ENCODE measurements at regions of chr20 and their contacts with region 1.

Region 1: DNA sequence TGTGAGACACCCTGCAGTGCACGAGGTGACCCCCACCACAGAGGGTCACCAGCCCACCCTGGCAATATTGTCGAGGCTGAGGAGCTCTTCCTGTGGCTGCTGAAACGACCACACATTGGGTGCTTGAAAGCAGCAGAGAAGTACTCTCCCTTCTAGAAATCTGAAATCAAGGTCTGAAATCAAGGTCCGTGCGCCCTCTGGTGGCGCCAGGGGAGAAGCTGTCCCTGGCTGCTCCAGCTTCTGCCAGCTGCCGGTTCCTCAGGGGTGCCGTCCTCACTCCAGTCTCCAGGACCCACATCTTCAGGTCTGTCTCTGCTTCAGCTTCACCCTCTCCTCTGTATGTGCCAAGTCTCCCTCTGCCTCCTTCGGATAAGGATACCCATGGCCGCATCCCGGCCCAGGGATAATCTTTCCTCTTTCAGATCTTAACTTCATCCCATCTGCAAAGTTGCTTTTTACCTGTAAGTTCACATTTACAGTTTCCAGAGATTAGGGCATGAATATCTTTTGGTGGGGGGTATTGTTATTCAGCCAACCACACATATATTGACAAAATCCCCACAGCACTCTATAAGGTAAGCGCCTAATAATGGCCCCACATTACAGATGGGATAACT is 108.3 kb upstream of the PHACTR3 start:
- DNase-seq: peak; percentile 65
- H3K4me3 Mint-ChIP-seq: no peak overlapping the region
- H3K27ac Mint-ChIP-seq: no peak overlapping the region
- H3K4me1 Mint-ChIP-seq: no peaks in the 10 kb centered on the region
- H3K27me3 Mint-ChIP-seq: peaks cover 71% of the 10 kb centered on the region
- CTCF ChIP-seq: peak; percentile 77

Region 2: DNA sequence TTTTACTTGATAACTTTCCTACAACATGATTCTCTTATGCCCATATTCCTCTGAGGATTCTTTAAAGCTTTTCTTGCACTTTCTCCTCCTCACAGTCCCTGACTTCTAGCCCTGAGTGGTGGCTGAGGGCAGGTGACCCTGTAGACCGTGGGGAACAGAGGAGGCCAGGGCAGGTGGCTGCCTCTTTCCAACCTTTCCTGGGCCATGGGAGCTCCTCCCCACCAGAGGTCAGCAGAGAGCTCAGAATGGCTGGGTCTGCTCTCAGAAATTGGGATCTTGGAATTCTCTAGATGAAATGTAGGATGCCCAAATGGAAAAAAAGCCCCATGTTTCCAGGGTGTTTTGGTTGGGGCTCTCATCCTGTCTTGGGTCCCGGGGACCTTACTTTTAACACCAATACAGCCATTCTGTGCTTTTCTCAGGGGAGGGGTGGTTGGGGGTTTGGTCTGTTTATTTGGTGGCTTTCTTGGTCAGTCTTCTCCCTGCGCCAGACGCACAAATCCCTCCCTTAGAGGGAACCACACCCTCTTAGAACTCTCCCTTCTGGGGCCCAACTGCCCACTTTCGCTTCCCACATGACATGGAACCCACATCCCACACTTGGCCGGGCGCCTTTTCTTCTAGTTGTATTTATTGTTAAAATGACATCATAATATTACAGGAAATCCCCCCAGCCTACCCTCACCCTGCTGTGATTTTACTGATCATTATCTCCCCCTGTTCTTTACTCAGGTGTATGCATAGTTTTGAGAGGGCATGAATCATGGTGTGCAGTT is 625.6 kb before region 1 on chr20:
- CTCF ChIA-PET with region 1: interaction called, 43 read pairs
- POLR2A ChIA-PET with region 1: no interaction called
- intact Hi-C with region 1: no loop called
- DNase-seq: peak; percentile 75
- H3K4me3 Mint-ChIP-seq: no peak overlapping the region
- H3K27ac Mint-ChIP-seq: no peak overlapping the region
- H3K4me1 Mint-ChIP-seq: peaks cover 1% of the 10 kb centered on the region
- H3K27me3 Mint-ChIP-seq: peaks cover 26% of the 10 kb centered on the region
- CTCF ChIP-seq: peak; percentile 87

Region 3: GRCh38 chr20:59087829-59088433 is 408.1 kb before region 1 on chr20:
- CTCF ChIA-PET with region 1: interaction called, 13 read pairs
- POLR2A ChIA-PET with region 1: no interaction called
- intact Hi-C with region 1: no loop called
- DNase-seq: peak; percentile 77
- H3K4me3 Mint-ChIP-seq: no peak overlapping the region
- H3K27ac Mint-ChIP-seq: no peak overlapping the region
- H3K4me1 Mint-ChIP-seq: peaks cover 16% of the 10 kb centered on the region
- H3K27me3 Mint-ChIP-seq: peaks cover 51% of the 10 kb centered on the region
- CTCF ChIP-seq: peak; percentile 81

Region 4: GRCh38 chr20:59455402-59456341 is 40.3 kb before region 1 on chr20:
- CTCF ChIA-PET with region 1: interaction called, 36 read pairs
- POLR2A ChIA-PET with region 1: interaction called, 4 read pairs
- intact Hi-C with region 1: no loop called
- DNase-seq: peak; percentile 34
- H3K4me3 Mint-ChIP-seq: no peak overlapping the region
- H3K27ac Mint-ChIP-seq: no peak overlapping the region
- H3K4me1 Mint-ChIP-seq: no peaks in the 10 kb centered on the region
- H3K27me3 Mint-ChIP-seq: peaks cover 61% of the 10 kb centered on the region
- CTCF ChIP-seq: peak; percentile 55

Region 5: GRCh38 chr20:59485576-59486454 is 10.2 kb before region 1 on chr20:
- CTCF ChIA-PET with region 1: interaction called, 38 read pairs
- POLR2A ChIA-PET with region 1: no interaction called
- intact Hi-C with region 1: no loop called
- DNase-seq: no peak
- H3K4me3 Mint-ChIP-seq: no peak overlapping the region
- H3K27ac Mint-ChIP-seq: no peak overlapping the region
- H3K4me1 Mint-ChIP-seq: no peaks in the 10 kb centered on the region
- H3K27me3 Mint-ChIP-seq: peaks cover 64% of the 10 kb centered on the region
- CTCF ChIP-seq: no peak

Region 6: GRCh38 chr20:59518881-59519688 is 23.1 kb after region 1 on chr20:
- CTCF ChIA-PET with region 1: interaction called, 17 read pairs
- POLR2A ChIA-PET with region 1: no interaction called
- intact Hi-C with region 1: no loop called
- DNase-seq: peak; percentile 62
- H3K4me3 Mint-ChIP-seq: no peak overlapping the region
- H3K27ac Mint-ChIP-seq: no peak overlapping the region
- H3K4me1 Mint-ChIP-seq: no peaks in the 10 kb centered on the region
- H3K27me3 Mint-ChIP-seq: peaks cover 90% of the 10 kb centered on the region
- CTCF ChIP-seq: peak; percentile 82